ENCODE measurements at regions of chr10 and their contacts with region 1.

Region 1: DNA sequence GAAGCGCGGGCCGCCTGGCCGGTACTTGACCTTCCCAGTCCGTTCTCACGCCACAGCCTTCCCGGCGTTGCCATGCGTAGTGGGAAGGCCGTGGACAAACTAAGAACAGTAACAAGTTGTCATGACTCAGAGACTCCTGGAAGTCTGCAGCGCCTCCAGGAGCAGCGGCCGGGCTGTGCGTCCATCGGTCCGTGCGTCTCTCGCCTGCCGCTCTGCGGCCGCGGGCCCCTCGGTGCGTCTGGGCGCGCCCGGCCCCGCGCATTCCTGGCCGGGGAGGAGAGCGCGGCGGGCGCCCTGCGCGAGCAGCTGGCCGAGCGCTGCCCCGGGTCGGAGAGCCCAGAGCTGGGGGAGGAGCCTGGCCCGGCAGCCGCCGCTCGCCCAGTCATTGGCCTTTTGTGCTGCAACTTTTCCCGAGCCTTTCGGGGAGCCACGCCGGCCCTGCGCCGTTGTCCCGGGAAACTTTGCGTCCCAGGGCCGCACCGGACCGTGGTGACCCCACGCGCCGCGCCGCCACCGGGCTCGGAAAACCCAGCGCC is 123.7 kb downstream of the TACC2 start:
- DNase-seq: peak; percentile 95
- H3K4me3 Mint-ChIP-seq: peak overlapping the region; percentile 85
- H3K27ac Mint-ChIP-seq: peak overlapping the region; percentile 90
- H3K4me1 Mint-ChIP-seq: peaks cover 32% of the 10 kb centered on the region
- H3K27me3 Mint-ChIP-seq: no peaks in the 10 kb centered on the region
- CTCF ChIP-seq: peak; percentile 30

Region 2: GRCh38 chr10:121237718-121238117 is 875.0 kb before region 1 on chr10:
- CTCF ChIA-PET with region 1: no interaction called
- POLR2A ChIA-PET with region 1: no interaction called
- intact Hi-C with region 1: no loop called
- DNase-seq: no peak
- H3K4me3 Mint-ChIP-seq: no peak overlapping the region
- H3K27ac Mint-ChIP-seq: no peak overlapping the region
- H3K4me1 Mint-ChIP-seq: peaks cover 5% of the 10 kb centered on the region
- H3K27me3 Mint-ChIP-seq: no peaks in the 10 kb centered on the region
- CTCF ChIP-seq: no peak

Region 3: DNA sequence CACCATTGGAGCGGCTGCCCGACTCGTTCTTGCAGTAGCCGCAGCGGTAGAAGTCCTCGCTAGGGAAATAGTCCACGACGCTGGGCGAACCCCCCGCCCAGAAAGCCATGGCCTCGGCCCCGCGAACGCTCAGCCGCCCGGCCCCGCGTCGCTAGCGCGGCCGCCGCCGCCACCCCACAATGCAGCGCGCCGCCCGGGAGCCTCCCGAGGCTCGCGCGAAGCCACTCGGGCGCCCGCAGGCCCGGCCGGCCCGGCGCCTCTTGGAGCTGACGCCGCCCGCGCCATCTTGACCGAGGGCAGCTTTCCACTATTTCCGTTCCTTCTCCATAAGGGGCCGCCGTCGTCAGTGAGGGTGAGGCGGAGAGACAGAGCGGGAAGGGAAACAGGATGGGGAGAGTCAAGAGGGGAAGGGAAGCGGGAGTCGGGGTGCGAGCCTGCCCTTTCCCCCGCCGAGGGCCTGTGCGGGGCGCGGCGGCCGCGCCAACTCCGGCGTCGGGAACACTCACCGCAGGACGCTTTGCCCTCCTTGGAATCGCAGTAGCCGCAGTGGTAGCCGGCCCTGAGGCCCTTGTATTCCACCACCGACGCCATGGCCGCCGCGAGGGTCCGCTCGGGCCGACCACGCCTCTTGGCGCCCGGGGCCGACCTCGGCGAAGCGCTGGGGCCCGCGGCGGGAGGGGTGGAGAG is 184.7 kb before region 1 on chr10 and contains the start of gene ATE1:
- CTCF ChIA-PET with region 1: interaction called, 5 read pairs
- POLR2A ChIA-PET with region 1: interaction called, 33 read pairs
- intact Hi-C with region 1: loop called (anchors 1 kb)
- DNase-seq: peak; percentile 95
- H3K4me3 Mint-ChIP-seq: peak within 1 kb of the TSS; percentile 93
- H3K27ac Mint-ChIP-seq: peak within 1 kb of the TSS; percentile 98
- H3K4me1 Mint-ChIP-seq: peaks cover 18% of the 10 kb centered on the region
- H3K27me3 Mint-ChIP-seq: no peaks in the 10 kb centered on the region
- CTCF ChIP-seq: no peak
- total RNA-seq, gene ATE1: 33.1 and 40.4 TPM in 2 replicates

Region 4: DNA sequence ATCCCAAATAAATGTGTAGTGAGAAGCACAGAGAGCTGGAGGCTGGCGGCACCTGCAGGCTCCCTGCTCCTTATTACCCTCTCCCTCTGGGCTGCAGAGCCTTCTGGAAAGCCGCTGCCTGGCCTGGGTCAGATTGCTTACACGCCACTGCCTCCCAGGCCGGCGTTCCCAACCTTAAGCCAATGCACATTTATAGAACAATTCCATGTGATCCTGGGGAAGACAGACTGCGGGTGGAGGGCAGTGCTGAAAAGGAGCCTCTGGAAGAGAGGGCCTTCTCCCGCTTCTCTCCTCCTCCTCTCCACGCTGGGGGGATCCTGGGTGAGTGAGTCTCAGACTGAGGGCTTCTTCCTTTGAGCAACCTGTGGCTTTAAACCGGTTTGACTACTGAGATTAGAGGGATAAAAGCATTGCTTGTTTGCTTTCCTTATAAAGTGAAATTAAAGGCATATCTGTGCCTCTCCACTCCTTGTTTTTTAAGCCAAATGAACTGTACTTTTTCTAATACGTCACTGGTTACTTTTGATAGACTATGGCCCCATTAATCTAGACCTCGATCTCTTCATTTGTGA is 118.2 kb before region 1 on chr10:
- CTCF ChIA-PET with region 1: interaction called, 4 read pairs
- POLR2A ChIA-PET with region 1: interaction called, 11 read pairs
- intact Hi-C with region 1: no loop called
- DNase-seq: no peak
- H3K4me3 Mint-ChIP-seq: no peak overlapping the region
- H3K27ac Mint-ChIP-seq: peak overlapping the region; percentile 66
- H3K4me1 Mint-ChIP-seq: peaks cover 24% of the 10 kb centered on the region
- H3K27me3 Mint-ChIP-seq: no peaks in the 10 kb centered on the region
- CTCF ChIP-seq: no peak

Region 5: DNA sequence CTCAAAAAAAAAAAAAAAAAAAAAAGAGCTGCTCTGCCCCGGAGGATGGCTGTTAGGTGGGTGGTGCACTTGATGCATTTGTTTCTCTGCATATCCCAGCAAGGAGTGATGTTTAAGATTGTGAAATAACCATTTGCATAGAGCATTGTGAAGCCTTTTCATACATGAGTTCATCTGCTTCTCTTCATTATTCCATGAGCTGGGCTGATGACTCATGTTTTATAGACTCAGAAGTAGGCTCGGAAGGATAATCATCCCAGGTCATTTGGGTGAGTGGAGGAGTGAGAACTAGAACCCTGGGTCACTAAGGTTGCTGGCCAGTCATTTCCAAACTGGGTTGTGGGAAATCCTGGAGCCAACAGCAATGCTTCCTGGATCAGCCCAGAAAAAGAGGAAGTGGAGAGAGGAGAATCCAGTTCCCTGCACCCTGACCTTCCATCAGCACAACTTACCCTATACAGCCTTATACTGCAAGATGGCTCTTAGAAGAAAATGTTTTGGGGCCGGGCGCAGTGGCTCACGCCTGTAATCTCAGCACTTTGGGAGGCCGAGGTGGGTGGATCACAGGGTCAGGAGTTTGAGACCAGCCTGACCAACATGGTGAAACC is 78.4 kb before region 1 on chr10:
- CTCF ChIA-PET with region 1: interaction called, 8 read pairs
- POLR2A ChIA-PET with region 1: interaction called, 3 read pairs
- intact Hi-C with region 1: loop called (anchors 1 kb)
- DNase-seq: peak; percentile 76
- H3K4me3 Mint-ChIP-seq: no peak overlapping the region
- H3K27ac Mint-ChIP-seq: no peak overlapping the region
- H3K4me1 Mint-ChIP-seq: peaks cover 5% of the 10 kb centered on the region
- H3K27me3 Mint-ChIP-seq: no peaks in the 10 kb centered on the region
- CTCF ChIP-seq: no peak

Region 6: GRCh38 chr10:122089311-122090017 is 23.2 kb before region 1 on chr10:
- CTCF ChIA-PET with region 1: interaction called, 21 read pairs
- POLR2A ChIA-PET with region 1: interaction called, 27 read pairs
- intact Hi-C with region 1: no loop called
- DNase-seq: peak; percentile 52
- H3K4me3 Mint-ChIP-seq: no peak overlapping the region
- H3K27ac Mint-ChIP-seq: peak overlapping the region; percentile 51
- H3K4me1 Mint-ChIP-seq: peaks cover 19% of the 10 kb centered on the region
- H3K27me3 Mint-ChIP-seq: no peaks in the 10 kb centered on the region
- CTCF ChIP-seq: peak; percentile 14

Region 7: DNA sequence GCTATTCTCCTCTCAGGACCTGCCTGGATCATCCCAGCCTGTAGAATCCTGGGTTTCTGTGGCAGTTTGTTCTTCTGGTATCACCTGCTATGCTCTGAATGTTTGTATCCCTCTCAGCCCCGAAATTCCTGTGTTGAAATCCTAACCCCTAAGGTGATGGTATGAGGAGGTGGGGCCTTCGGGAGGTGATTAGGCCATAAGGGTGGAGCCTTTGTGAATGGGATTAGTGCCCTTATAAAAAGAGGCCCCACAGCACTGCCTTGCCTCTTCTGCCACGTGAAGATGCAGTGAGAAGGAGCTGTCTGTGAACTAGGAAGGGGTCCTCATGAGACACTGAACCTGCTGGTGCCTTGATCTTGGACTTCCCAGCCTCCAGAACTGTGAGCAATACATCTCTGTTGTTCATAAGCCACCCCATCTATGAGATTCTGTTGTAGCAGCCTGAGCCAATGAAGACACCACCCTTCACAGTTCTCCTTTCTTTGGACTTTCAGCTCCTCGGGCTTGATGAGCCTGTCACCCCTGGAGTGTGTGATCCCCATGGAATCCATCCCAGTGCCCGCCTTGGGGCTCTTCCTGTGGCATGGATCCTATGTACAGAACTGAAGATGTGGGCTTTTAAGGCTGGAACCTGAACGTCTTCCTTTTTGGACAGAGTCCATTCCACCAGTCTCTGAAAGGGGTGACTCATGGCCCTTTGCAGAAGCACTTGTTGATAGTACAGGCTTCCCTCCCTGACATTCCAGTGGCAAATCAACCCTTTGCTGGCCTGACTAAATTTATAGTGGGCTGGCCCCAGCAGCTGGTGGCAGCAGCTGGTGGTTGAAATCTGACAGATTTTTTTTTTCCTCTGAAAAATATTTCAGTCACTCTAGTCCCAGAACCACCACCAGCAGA is 14.3 kb after region 1 on chr10:
- CTCF ChIA-PET with region 1: interaction called, 12 read pairs
- POLR2A ChIA-PET with region 1: interaction called, 132 read pairs
- intact Hi-C with region 1: no loop called
- DNase-seq: peak; percentile 92
- H3K4me3 Mint-ChIP-seq: peak overlapping the region; percentile 80
- H3K27ac Mint-ChIP-seq: peak overlapping the region; percentile 89
- H3K4me1 Mint-ChIP-seq: peaks cover 30% of the 10 kb centered on the region
- H3K27me3 Mint-ChIP-seq: no peaks in the 10 kb centered on the region
- CTCF ChIP-seq: no peak

Measured in MCF 10A (cell line).